ENCODE measurements at regions of chr21 and their contacts with region 1.

Region 1: DNA sequence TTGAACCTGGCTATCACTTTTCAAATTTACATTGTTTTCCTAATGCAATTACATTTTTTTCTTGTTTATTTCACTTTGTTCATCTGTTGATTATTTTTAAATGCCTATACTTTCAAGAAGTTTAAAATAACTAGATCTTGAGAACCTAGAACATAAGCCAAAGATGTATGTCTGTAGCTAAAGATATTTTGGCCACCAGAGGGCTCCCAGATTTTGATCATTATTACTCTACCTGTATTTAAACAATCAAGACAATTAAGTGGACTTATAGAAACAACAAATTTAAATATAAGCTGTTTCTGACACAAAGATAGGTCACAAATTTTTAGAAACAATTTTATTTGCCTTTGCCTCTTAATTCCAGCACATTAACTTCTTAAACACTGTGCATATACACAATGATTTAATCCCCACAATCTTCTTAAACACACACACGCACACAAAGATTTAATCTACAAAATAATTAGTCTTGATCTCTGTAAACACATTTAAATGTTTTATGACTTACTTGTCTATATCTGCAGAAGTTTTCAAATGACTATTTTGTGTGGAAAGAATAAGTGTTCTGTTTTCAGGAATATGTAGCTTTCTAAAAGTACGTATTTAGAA is 380.0 kb downstream of the DSCAM start:
- DNase-seq: peak in 1 of 2 experiments; percentile 7
- H3K4me3 ChIP-seq: no peak overlapping the region
- H3K4me3 Mint-ChIP-seq: no peak overlapping the region
- H3K27ac Mint-ChIP-seq: no peak overlapping the region
- H3K4me1 ChIP-seq: no peaks in the 10 kb centered on the region
- H3K4me1 Mint-ChIP-seq: no peaks in the 10 kb centered on the region
- H3K27me3 ChIP-seq: no peaks in the 10 kb centered on the region
- H3K27me3 Mint-ChIP-seq: peaks cover 23% of the 10 kb centered on the region
- CTCF ChIP-seq: peak; percentile 39 to 42

Region 2: GRCh38 chr21:40516335-40516734 is 49.3 kb after region 1 on chr21:
- CTCF ChIA-PET with region 1: no interaction called
- POLR2A ChIA-PET with region 1: no interaction called
- intact Hi-C with region 1: no loop called
- DNase-seq: no peak
- H3K4me3 ChIP-seq: no peak overlapping the region
- H3K4me3 Mint-ChIP-seq: no peak overlapping the region
- H3K27ac Mint-ChIP-seq: no peak overlapping the region
- H3K4me1 ChIP-seq: no peaks in the 10 kb centered on the region
- H3K4me1 Mint-ChIP-seq: no peaks in the 10 kb centered on the region
- H3K27me3 ChIP-seq: no peaks in the 10 kb centered on the region
- H3K27me3 Mint-ChIP-seq: no peaks in the 10 kb centered on the region
- CTCF ChIP-seq: no peak

Region 3: GRCh38 chr21:41045534-41046268 is 578.7 kb after region 1 on chr21:
- CTCF ChIA-PET with region 1: no interaction called
- POLR2A ChIA-PET with region 1: no interaction called
- intact Hi-C with region 1: loop called (anchors 5 kb)
- DNase-seq: peak; percentile 40 to 48
- H3K4me3 ChIP-seq: no peak overlapping the region
- H3K4me3 Mint-ChIP-seq: no peak overlapping the region
- H3K27ac Mint-ChIP-seq: no peak overlapping the region
- H3K4me1 ChIP-seq: no peaks in the 10 kb centered on the region
- H3K4me1 Mint-ChIP-seq: no peaks in the 10 kb centered on the region
- H3K27me3 ChIP-seq: no peaks in the 10 kb centered on the region
- H3K27me3 Mint-ChIP-seq: peaks cover 4% of the 10 kb centered on the region
- CTCF ChIP-seq: peak; percentile 51 to 66